ENCODE measurements at regions of chr10 and their contacts with region 1.

Region 1: DNA sequence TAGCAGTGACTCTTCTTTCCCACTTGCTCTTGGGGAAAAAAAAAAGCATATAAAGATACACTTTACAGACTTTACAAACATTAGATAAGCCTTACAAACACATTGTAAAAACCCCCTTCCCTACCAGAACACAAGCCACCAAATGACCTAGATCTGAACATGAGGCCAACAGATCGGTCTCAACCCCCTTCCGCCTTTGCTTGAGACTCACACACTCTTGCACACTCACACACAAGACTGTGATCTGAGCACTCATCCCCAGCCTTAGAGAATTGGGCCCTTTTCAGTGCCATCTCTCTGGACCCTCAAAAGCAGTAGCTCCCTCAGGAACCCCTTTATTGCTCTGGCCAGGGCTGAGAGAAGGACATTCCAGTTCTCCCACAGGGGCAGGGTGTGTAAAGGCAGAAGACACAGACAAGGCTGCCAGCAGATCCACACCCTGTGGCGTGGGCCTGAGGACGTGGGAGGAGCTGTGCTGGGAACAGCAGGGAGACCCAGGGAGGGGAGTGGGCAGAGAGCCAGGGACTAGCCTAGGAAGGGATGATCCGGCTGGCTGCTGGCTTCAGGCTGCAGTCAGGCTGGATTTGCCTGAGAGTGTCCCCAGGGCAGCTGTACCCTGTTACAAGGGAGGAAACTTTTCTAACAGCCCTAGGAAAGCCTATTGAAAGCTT is 206.7 kb downstream of the KIAA1217 start:
- DNase-seq: peak; percentile 22
- ATAC-seq: peak; percentile 72
- H3K4me3 ChIP-seq: no peak overlapping the region
- H3K27ac ChIP-seq: no peak overlapping the region
- H3K4me1 ChIP-seq: peaks cover 8% of the 10 kb centered on the region; the same call in 1 of the 2 replicates
- H3K27me3 ChIP-seq: peaks cover 7% of the 10 kb centered on the region
- CTCF ChIP-seq: no peak
- POLR2A ChIP-seq: no peak
- RAD21 ChIP-seq: no peak

Region 2: GRCh38 chr10:24209946-24210491 is 205.6 kb before region 1 on chr10:
- CTCF ChIA-PET with region 1: interaction called, 13 read pairs
- POLR2A ChIA-PET with region 1: no interaction called
- dilution Hi-C with region 1: no loop called
- in situ Hi-C with region 1: no loop called
- intact Hi-C with region 1: no loop called
- DNase-seq: peak; percentile 71
- ATAC-seq: peak; percentile 35
- H3K4me3 ChIP-seq: no peak overlapping the region
- H3K27ac ChIP-seq: no peak overlapping the region
- H3K4me1 ChIP-seq: peaks cover 4% of the 10 kb centered on the region; the same call in 1 of the 2 replicates
- H3K27me3 ChIP-seq: peaks cover 3% of the 10 kb centered on the region
- CTCF ChIP-seq: no peak
- POLR2A ChIP-seq: no peak
- RAD21 ChIP-seq: no peak

Region 3: GRCh38 chr10:24272374-24272773 is 143.2 kb before region 1 on chr10:
- CTCF ChIA-PET with region 1: no interaction called
- POLR2A ChIA-PET with region 1: no interaction called
- dilution Hi-C with region 1: no loop called
- in situ Hi-C with region 1: no loop called
- intact Hi-C with region 1: no loop called
- DNase-seq: no peak
- ATAC-seq: no peak; the same call in 1 of the 2 replicates
- H3K4me3 ChIP-seq: no peak overlapping the region
- H3K27ac ChIP-seq: no peak overlapping the region
- H3K4me1 ChIP-seq: no peaks in the 10 kb centered on the region
- H3K27me3 ChIP-seq: no peaks in the 10 kb centered on the region
- CTCF ChIP-seq: no peak
- POLR2A ChIP-seq: no peak
- RAD21 ChIP-seq: no peak

Region 4: DNA sequence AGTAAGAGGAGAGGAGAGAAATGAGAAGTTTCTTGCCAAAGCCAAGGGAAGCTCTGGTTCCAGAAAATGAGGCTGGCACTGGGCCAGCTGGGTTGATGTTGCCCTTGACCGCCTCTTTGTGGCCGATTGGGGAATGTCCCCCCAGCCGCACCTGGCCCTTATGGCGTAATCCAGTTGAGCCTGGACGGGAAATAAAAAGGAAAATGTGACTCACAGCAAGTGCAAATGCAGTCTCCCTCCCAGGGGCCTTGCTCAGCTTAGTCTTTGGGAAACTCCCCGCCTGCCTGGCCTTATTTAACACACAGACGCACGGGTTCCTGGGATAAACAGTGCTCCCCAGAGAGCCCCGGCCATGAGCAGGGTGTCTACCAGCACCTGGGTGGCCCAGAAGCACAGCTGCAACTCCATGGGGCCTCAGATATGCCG is 31.9 kb before region 1 on chr10:
- CTCF ChIA-PET with region 1: no interaction called
- POLR2A ChIA-PET with region 1: no interaction called
- dilution Hi-C with region 1: no loop called
- in situ Hi-C with region 1: no loop called
- intact Hi-C with region 1: no loop called
- DNase-seq: peak; percentile 98
- ATAC-seq: peak; percentile 93
- H3K4me3 ChIP-seq: no peak overlapping the region
- H3K27ac ChIP-seq: peak overlapping the region; percentile 41; the same call in 1 of the 2 replicates
- H3K4me1 ChIP-seq: peaks cover 7% of the 10 kb centered on the region
- H3K27me3 ChIP-seq: 0 out of 2 replicates have a peak, but pooled peaks cover 2% of the 10 kb centered on the region
- CTCF ChIP-seq: peak; percentile 68
- POLR2A ChIP-seq: no peak
- RAD21 ChIP-seq: peak; percentile 52